ENCODE measurements at regions of chr9 and their contacts with region 1.

Region 1: DNA sequence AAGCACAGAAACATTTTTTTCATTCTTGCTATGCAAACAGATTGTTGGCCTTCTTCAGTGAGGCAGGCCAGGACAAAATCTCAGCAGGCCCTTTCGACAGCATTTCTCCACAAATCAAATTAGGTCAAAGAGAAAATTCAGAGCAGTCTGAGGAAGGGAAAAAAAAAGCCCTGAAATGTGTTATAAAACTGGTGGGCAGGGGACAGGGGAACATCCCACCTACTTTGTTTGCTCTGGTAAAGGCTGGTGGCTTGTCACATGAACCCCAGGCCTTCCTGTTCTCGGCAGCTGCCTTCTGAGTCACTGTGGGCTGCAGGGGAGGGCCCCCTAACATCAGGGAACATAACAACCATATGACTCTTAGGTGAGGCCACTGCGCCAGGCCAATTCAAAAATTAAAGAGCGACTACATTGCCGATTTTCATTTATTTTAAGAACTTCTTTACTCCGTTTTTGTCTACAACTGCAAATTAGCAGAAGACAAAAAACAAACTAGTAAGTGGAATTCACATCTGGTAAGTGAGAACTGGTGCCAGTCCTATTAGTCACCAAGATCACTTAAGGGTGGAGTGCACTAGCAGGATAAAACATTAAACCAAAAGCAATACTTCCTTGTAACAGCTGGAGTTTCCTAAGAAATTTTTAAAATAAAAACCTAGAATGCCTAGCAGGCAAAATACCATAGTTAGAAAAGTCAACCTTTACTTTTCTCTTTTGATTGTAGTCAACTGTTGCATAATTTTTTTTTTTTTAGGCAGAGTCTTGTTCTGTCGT is 46.2 kb upstream of the DENND4C start:
- DNase-seq: peak; percentile 80
- H3K4me3 ChIP-seq: no peak overlapping the region
- H3K27ac ChIP-seq: peak overlapping the region; percentile 86 to 94 (median 89)
- H3K4me1 ChIP-seq: peaks cover 16 to 58% (median 40%) of the 10 kb centered on the region in 4 donors
- H3K27me3 ChIP-seq: no peaks in the 10 kb centered on the region
- CTCF ChIP-seq: no peak
- EP300 ChIP-seq: no peak
- POLR2A ChIP-seq: no peak

Region 2: GRCh38 chr9:18490635-18491370 is 693.5 kb before region 1 on chr9:
- in situ Hi-C with region 1: no loop called
- intact Hi-C with region 1: no loop called
- DNase-seq: no peak
- H3K4me3 ChIP-seq: no peak overlapping the region
- H3K27ac ChIP-seq: peak overlapping the region; percentile 19 to 66 (median 44)
- H3K4me1 ChIP-seq: peaks cover 0 to 4% (median 0%) of the 10 kb centered on the region in 4 donors
- H3K27me3 ChIP-seq: no peaks in the 10 kb centered on the region
- CTCF ChIP-seq: no peak
- EP300 ChIP-seq: no peak
- POLR2A ChIP-seq: no peak

Region 3: GRCh38 chr9:19085295-19085694 is 99.0 kb before region 1 on chr9:
- in situ Hi-C with region 1: loop called in 1 of 4 experiments (anchors 25 kb)
- intact Hi-C with region 1: no loop called
- DNase-seq: no peak
- H3K4me3 ChIP-seq: no peak overlapping the region
- H3K27ac ChIP-seq: no peak overlapping the region
- H3K4me1 ChIP-seq: no peaks in the 10 kb centered on the region
- H3K27me3 ChIP-seq: no peaks in the 10 kb centered on the region
- CTCF ChIP-seq: peak; percentile 18 to 48 (median 39)
- EP300 ChIP-seq: no peak
- POLR2A ChIP-seq: no peak

Region 4: DNA sequence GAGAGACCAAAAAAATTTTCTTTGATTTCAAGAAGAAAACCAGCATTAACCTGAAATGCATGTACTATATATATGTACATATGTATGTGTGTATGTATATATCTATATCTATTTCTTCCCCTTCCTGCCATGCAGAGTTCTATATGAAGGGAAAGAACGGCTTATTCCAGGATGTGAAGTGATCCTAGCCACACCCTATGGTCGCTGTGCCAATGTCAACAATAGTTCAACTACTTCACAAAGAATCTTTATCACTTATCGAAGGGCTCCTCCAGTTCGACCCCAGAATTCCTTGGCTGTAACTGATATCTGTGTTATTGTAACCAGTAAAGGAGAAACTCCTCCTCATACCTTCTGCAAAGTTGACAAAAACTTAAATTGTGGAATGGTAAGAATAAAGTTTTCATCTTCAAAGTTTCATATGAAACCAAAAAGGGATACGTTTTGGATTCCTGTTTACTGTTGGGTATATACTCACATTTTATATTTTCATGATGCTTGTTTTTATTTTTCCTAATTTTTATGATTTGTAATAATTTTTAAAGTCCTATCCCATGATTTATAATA is 102.4 kb after region 1 on chr9:
- in situ Hi-C with region 1: loop called in 1 of 4 experiments (anchors 25 kb)
- intact Hi-C with region 1: no loop called
- DNase-seq: peak; percentile 76
- H3K4me3 ChIP-seq: no peak overlapping the region
- H3K27ac ChIP-seq: peak overlapping the region in 3 of 4 donors; percentile 35 to 54 (median 41)
- H3K4me1 ChIP-seq: peaks cover 11 to 39% (median 30%) of the 10 kb centered on the region in 4 donors
- H3K27me3 ChIP-seq: no peaks in the 10 kb centered on the region
- CTCF ChIP-seq: no peak
- EP300 ChIP-seq: no peak
- POLR2A ChIP-seq: no peak

Region 5: DNA sequence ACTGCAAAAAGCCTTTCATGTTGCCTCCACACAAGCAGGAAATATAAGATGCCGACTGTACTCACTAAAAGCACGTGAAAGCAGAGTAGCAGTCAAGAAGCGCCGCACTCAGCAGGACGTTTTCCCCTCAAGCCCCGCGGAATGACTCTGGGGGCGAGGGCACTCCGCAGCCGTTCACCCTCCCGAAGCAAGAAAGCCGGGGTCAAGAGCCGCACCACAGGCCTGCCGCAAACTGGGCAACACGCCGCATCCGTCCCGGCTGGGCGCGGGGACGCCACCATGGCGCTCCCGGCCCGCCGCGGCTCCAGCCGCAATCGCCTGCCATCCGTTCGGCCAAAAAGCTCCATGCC is 195.3 kb after region 1 on chr9:
- in situ Hi-C with region 1: loop called in 1 of 4 experiments (anchors 25 kb)
- intact Hi-C with region 1: no loop called
- DNase-seq: peak; percentile 42
- H3K4me3 ChIP-seq: peak overlapping the region; percentile 57 to 83 (median 79)
- H3K27ac ChIP-seq: peak overlapping the region; percentile 85 to 96 (median 94)
- H3K4me1 ChIP-seq: peaks cover 10 to 30% (median 19%) of the 10 kb centered on the region in 4 donors
- H3K27me3 ChIP-seq: no peaks in the 10 kb centered on the region
- CTCF ChIP-seq: no peak
- EP300 ChIP-seq: no peak
- POLR2A ChIP-seq: no peak

Measured in transverse colon (tissue), 4 donors.